ENCODE measurements at regions of chr1 and their contacts with region 1.

Region 1: DNA sequence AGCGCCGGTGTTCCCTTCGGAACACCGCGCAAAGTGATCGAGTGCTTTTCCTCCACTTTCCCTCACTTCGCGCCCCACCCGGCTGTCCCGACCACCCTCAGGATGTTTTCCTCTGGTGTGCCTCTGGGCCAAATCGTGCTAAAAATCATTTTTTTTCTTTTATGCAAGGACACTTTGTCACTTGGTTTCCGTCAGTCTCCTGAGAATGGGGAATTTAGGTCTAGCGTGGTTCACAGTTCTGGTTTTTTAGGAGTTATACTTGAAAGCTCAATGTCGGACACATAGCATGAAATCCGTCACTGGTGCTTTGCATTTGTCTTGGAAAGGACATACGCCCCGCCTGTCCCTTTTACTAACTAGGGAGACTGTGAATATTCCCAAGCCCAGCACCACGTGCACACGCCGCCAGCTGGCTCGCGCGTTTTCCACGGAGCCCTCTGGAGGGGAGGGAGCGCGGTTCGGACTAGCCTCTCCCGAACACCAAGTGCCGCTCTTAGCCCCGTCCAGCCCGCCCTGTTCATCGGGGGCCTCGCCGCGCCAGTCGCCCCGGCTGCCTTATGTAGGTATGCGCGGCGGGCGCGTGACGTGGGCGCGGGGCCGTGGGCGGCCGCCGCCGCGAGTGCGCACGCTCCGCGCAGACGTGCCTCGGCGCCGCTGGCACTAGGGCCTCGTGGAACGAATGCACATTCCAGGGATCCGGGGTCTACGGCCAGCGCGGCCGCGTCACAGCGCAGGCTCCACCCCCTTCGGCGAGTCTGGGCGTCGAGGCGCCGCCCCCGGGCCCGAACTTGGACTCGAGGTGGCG is 572 bp upstream of the IRF2BP2 start:
- DNase-seq: peak; percentile 84
- ATAC-seq: peak; percentile 45
- H3K4me3 Mint-ChIP-seq: peak overlapping the region; percentile 90
- H3K27ac Mint-ChIP-seq: peak overlapping the region; percentile 95
- H3K4me1 Mint-ChIP-seq: peaks cover 56% of the 10 kb centered on the region
- H3K27me3 Mint-ChIP-seq: no peaks in the 10 kb centered on the region
- CTCF ChIP-seq: no peak

Region 2: GRCh38 chr1:234176000-234176399 is 434.6 kb before region 1 on chr1:
- CTCF ChIA-PET with region 1: no interaction called
- POLR2A ChIA-PET with region 1: no interaction called
- intact Hi-C with region 1: no loop called
- DNase-seq: no peak
- ATAC-seq: no peak
- H3K4me3 Mint-ChIP-seq: no peak overlapping the region
- H3K27ac Mint-ChIP-seq: no peak overlapping the region
- H3K4me1 Mint-ChIP-seq: no peaks in the 10 kb centered on the region
- H3K27me3 Mint-ChIP-seq: peaks cover 28% of the 10 kb centered on the region
- CTCF ChIP-seq: no peak

Region 3: GRCh38 chr1:234499119-234499942 is 111.2 kb before region 1 on chr1:
- CTCF ChIA-PET with region 1: interaction called, 9 read pairs
- POLR2A ChIA-PET with region 1: interaction called, 3 read pairs
- intact Hi-C with region 1: loop called (anchors 1 kb)
- DNase-seq: peak; percentile 78
- ATAC-seq: peak; percentile 91
- H3K4me3 Mint-ChIP-seq: peak overlapping the region; percentile 55
- H3K27ac Mint-ChIP-seq: peak overlapping the region; percentile 66
- H3K4me1 Mint-ChIP-seq: peaks cover 28% of the 10 kb centered on the region
- H3K27me3 Mint-ChIP-seq: no peaks in the 10 kb centered on the region
- CTCF ChIP-seq: peak; percentile 38

Region 4: DNA sequence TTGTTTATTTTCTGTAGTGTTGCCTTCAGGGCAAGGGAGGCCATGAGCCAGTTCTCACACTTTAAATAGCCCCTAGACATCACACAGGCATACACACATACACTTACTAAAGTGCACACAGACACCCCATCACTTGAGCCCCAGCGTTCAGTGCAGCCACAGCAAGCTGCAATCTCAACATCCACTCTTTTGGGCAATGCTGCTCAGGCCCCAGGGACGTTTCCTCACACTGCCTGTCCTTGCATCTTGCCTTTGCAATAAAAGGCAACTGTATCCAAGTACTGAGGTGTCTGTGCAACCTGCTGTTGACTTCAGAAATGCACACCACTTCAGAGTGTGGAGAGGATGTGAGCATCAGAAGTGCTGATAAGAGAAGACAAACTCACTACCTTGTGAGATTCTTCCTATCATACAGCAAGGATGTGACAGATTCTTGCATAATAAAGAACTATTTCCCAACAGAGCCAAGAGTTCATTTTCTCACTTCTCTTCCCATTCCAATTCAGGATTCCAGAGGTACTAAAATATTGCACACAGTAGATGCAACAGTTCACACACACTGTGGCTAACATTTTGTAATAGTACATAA is 36.7 kb before region 1 on chr1:
- CTCF ChIA-PET with region 1: no interaction called
- POLR2A ChIA-PET with region 1: no interaction called
- intact Hi-C with region 1: no loop called
- DNase-seq: no peak
- ATAC-seq: no peak
- H3K4me3 Mint-ChIP-seq: no peak overlapping the region
- H3K27ac Mint-ChIP-seq: no peak overlapping the region
- H3K4me1 Mint-ChIP-seq: no peaks in the 10 kb centered on the region
- H3K27me3 Mint-ChIP-seq: no peaks in the 10 kb centered on the region
- CTCF ChIP-seq: no peak

Region 5: GRCh38 chr1:234722904-234723720 is 112.6 kb after region 1 on chr1:
- CTCF ChIA-PET with region 1: no interaction called
- POLR2A ChIA-PET with region 1: interaction called, 78 read pairs
- intact Hi-C with region 1: no loop called
- DNase-seq: no peak
- ATAC-seq: peak; percentile 41
- H3K4me3 Mint-ChIP-seq: peak overlapping the region; percentile 67
- H3K27ac Mint-ChIP-seq: peak overlapping the region; percentile 71
- H3K4me1 Mint-ChIP-seq: peaks cover 46% of the 10 kb centered on the region
- H3K27me3 Mint-ChIP-seq: no peaks in the 10 kb centered on the region
- CTCF ChIP-seq: no peak

Region 6: DNA sequence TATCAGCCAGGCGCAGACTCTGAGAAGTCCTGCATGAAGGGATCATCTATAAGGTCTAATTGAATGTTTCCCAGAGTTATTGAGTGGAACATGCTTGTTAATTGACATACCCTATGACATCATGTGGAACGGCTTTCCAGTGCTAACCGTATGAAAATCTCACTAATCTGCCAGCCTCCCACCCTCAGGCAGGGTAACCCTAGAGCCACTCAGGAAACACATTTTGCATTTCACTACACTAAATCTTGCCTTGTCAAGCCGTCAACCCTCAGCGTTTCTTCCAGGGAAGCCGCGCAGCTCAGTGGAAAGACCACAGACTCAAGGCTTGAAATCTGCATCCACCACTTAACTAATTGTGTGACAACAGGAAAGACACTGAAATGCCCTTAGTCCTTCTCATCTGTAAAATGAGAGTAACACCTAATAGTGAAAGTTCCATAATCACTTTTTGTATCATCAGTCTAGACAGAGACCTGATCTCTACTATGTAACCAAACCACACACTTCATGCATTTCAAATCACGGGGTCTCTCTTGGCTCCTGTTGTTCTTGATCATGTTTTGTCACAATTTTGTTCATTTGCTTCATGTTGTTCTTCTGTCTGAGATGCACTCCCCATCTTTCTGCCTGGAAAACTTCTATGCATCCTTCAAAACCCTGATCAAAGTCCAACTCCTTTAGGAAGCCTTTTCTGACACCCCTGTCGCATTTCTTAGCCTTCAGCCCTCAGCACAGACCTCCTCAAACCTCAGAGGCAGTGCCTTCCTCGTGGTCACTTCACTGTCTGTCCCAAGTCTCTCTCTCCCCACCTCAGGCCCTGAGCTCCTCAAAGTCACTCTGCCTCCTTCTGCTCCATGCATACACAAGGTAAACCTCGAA is 271.6 kb after region 1 on chr1:
- CTCF ChIA-PET with region 1: interaction called, 3 read pairs
- POLR2A ChIA-PET with region 1: interaction called, 19 read pairs
- intact Hi-C with region 1: loop called (anchors 2 kb)
- DNase-seq: no peak
- ATAC-seq: peak; percentile 70
- H3K4me3 Mint-ChIP-seq: peak overlapping the region; percentile 75
- H3K27ac Mint-ChIP-seq: peak overlapping the region; percentile 82
- H3K4me1 Mint-ChIP-seq: peaks cover 46% of the 10 kb centered on the region
- H3K27me3 Mint-ChIP-seq: no peaks in the 10 kb centered on the region
- CTCF ChIP-seq: no peak

Region 7: DNA sequence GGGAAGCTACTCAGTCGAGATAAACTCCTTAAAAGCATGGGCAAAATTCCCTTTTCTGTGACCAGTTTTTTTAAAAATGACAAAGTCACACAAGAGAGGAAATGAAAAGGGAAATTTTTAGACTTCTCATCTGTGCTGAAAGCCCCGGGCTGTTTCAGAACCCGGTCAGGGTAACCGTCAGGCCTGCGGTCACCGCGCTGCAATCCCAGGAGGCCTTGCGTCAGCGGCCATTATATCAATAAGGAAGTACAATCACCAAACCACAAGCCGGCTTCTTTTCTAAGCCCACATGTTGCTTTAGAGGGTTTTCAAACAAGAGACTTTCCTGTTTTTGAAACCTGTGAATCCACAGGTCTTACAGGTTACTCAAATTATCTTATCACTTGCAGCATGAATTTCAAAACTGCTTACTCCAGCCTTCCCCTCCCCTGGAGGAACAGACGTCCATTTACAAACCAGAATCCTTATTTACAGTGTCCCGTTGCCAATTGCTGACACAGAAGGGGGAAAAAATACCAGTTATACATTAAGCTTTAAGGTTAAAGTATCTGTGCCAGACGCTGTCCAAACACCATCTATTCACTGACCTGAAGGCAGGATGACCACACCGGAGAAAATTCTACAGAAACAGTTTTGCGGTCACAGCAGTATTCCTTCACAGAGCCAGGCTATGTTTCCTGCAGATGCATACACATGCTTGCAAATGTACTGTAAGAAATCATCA is 352.8 kb after region 1 on chr1:
- CTCF ChIA-PET with region 1: interaction called, 5 read pairs
- POLR2A ChIA-PET with region 1: interaction called, 52 read pairs
- intact Hi-C with region 1: loop called (anchors 1 kb)
- DNase-seq: peak; percentile 84
- ATAC-seq: peak; percentile 89
- H3K4me3 Mint-ChIP-seq: peak overlapping the region; percentile 82
- H3K27ac Mint-ChIP-seq: peak overlapping the region; percentile 98
- H3K4me1 Mint-ChIP-seq: peaks cover 66% of the 10 kb centered on the region
- H3K27me3 Mint-ChIP-seq: no peaks in the 10 kb centered on the region
- CTCF ChIP-seq: no peak

Region 8: GRCh38 chr1:235050911-235051360 is 440.4 kb after region 1 on chr1:
- CTCF ChIA-PET with region 1: no interaction called
- POLR2A ChIA-PET with region 1: interaction called, 87 read pairs
- intact Hi-C with region 1: no loop called
- DNase-seq: peak; percentile 30
- ATAC-seq: peak; percentile 51
- H3K4me3 Mint-ChIP-seq: peak overlapping the region; percentile 24
- H3K27ac Mint-ChIP-seq: peak overlapping the region; percentile 60
- H3K4me1 Mint-ChIP-seq: peaks cover 50% of the 10 kb centered on the region
- H3K27me3 Mint-ChIP-seq: no peaks in the 10 kb centered on the region
- CTCF ChIP-seq: no peak

Region 9: DNA sequence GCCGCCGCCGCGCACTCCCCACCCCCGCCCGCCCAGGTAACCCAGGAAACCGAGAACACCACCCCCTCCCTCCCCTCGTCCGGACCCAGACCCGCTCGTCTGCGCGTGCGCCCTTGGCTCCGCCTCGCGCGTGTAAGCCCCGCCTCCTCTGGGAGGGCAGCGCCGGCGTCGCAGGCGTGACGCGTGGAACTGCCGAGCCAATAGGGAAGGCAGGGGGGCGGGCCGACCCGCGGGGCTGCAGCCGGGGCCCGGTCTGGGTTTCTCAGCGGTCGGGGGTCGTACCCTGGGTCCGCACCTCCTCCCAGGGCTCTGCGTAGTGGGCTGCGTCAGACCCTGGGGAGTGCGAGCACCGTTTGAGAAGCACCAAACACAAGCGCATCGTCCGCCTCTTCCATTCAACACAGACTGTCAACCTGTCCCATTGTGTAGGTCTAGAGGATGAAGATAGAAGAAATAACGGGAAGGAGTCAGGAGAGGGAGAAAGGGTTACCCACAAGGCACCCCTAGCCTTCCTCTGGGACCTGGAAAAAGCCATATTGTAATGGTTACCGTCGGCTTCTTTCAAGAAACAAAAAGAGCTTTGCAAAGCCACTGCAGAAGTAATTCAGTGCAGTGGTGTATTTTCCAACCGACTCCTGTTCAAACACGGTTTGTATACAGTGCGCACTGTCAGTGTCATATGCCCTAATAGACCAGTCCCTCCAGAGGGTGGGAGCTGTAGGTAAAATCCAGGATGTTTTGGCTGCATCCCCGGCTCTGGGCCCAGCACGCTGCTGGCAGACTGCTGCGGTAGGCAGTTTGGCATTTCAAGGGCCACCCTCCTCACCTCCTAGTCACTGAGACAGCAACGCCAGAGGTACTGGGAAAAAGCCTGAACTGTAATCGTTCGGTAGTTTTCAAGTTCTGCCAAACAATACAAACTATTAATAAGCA is 1256.6 kb after region 1 on chr1:
- CTCF ChIA-PET with region 1: no interaction called
- POLR2A ChIA-PET with region 1: no interaction called
- intact Hi-C with region 1: loop called (anchors 5 kb)
- DNase-seq: peak; percentile 99
- ATAC-seq: peak; percentile 71
- H3K4me3 Mint-ChIP-seq: peak overlapping the region; percentile 98
- H3K27ac Mint-ChIP-seq: peak overlapping the region; percentile 99
- H3K4me1 Mint-ChIP-seq: peaks cover 64% of the 10 kb centered on the region
- H3K27me3 Mint-ChIP-seq: no peaks in the 10 kb centered on the region
- CTCF ChIP-seq: no peak